MCF 10A (cell line): ENCODE measurements at regions of chr3 and their contacts with region 1.

Region 1: DNA sequence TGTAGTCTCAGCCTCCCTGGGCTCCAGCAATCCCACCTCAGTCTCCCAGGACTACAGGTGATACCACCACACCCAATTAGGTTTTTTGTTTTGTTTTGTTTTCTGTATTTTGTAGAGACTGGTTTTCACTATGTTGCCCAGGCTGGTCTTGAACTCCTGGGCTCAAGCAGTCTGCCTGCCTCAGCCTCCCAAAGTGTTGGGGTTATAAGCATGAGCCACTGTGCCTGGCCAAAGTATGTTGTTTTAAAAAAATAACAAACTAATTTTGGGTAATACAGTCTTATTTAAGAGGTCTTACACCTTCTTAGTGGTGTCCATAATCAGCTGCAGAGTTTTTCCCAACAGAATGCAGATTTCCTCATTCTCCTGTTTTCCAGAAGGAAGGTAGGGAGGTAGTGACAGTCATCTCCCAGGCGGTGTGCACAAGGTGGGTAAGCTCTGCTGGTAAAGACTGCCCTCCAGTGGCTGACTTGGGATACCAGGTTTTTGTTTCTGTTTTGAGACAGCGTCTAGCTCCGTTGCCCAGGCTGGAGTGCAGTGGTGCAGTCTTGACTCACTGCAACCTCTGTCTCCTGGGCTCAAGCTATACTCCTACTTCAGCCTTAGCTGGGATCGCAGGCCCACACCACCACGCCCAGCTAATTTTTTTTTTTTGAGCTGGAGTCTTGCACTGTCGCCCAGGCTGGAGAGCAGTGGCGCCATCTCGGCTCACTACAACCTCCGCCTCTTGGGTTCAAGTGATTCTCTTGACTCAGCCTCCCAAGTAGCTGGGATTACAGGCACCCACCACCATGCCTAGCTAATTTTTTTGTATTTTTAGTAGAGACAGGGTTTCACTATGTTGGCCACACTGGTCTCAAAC is 58.4 kb downstream of the MAP6D1 start:
- DNase-seq: peak; percentile 83
- H3K4me3 Mint-ChIP-seq: no peak overlapping the region
- H3K27ac Mint-ChIP-seq: peak overlapping the region; percentile 14
- H3K4me1 Mint-ChIP-seq: peaks cover 16% of the 10 kb centered on the region
- H3K27me3 Mint-ChIP-seq: no peaks in the 10 kb centered on the region
- CTCF ChIP-seq: peak; percentile 78

Region 2: DNA sequence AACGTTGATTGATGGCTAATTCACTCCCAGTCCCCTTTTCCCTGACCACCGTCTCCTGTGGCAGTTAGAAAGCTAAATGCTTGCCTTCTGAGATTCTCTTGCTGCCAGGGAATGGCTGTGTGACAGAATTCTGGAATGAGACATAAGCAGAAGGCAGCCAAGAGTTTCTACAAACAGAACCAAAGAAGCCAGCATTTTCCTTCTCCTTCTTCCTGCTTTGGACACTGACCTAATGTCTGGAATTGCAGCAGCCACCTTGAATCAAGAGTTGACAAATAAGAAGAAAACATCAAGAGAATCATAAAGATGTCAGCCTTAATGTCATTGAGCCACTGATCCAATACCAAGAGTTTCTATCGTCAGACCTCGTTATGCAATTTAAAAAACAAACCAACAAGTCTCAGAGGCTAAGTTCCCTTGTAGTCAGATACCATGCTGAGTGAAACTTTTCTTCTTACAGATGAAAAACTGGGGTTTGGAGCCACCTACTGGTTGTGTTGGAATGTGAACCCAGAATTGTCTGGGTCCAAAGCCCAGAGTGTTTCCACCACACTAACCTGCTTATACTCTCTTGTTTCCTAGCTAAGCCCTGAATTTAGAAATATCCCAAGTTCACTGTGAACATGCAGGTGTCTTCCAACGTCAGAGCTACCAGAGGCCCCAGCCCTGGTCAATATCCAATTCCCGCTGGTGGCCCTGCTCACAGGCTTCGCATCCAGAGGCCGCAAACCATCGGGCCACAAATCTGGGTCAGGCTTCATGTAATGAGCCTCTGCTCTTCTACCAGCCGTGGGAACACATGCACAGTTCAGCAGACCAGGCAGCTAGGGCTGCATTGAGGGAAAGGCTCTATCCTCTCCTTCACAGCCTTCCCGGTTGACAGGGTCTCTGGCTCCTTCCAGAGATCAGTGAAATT is 381.0 kb before region 1 on chr3:
- CTCF ChIA-PET with region 1: interaction called, 7 read pairs
- POLR2A ChIA-PET with region 1: no interaction called
- intact Hi-C with region 1: loop called (anchors 10 kb)
- DNase-seq: peak; percentile 78
- H3K4me3 Mint-ChIP-seq: no peak overlapping the region
- H3K27ac Mint-ChIP-seq: no peak overlapping the region
- H3K4me1 Mint-ChIP-seq: peaks cover 18% of the 10 kb centered on the region
- H3K27me3 Mint-ChIP-seq: no peaks in the 10 kb centered on the region
- CTCF ChIP-seq: peak; percentile 77

Region 3: DNA sequence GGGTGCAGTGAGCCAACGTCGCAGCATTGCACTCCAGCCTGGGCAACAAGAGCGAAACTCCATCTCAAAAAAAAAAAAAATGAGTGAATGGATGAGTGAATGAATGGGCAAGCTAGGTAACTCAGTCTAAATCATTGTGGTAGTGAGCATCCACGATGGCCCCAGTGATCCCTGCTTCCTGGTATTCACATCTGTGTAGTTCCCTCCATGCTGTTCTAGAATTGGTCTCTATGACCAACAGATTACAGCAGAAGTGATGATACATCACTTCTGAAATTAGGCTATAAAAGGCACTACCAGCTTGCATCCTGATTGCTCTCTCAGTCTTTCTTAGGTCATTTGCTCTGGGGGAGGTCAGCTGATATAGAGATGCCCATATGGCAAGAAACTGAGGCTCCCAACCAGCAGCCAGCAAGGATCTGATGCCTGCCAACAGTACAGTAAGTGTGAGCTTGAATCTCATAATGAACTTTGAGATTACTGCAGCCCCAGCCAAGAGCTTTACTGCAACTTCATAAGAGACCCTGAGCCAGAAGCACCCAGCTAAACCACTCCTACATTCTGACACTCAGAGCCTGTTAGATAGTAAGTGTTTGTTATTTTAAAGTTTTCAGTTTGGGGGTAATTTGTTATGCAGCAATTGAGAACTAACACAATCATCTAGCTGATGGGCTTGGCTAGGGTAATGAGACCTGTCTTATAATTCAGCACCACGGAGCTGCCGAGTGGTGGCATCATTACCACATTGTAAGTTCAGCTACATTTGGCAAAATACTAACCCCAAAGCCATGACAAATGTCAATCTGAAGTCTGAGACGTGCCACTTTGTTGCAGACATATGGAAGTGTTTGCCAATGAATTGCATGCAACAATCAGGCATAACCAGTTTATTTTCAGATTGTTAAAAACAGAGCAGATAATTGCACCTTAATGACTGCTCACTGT is 264.5 kb before region 1 on chr3:
- CTCF ChIA-PET with region 1: interaction called, 11 read pairs
- POLR2A ChIA-PET with region 1: no interaction called
- intact Hi-C with region 1: loop called (anchors 1 kb)
- DNase-seq: peak; percentile 27
- H3K4me3 Mint-ChIP-seq: no peak overlapping the region
- H3K27ac Mint-ChIP-seq: no peak overlapping the region
- H3K4me1 Mint-ChIP-seq: peaks cover 4% of the 10 kb centered on the region
- H3K27me3 Mint-ChIP-seq: no peaks in the 10 kb centered on the region
- CTCF ChIP-seq: peak; percentile 34

Region 4: GRCh38 chr3:183697610-183698317 is 69.2 kb before region 1 on chr3 and contains the start of gene YEATS2:
- CTCF ChIA-PET with region 1: interaction called, 4 read pairs
- POLR2A ChIA-PET with region 1: interaction called, 12 read pairs
- intact Hi-C with region 1: no loop called
- DNase-seq: peak; percentile 63
- H3K4me3 Mint-ChIP-seq: peak within 1 kb of the TSS; percentile 77
- H3K27ac Mint-ChIP-seq: peak within 1 kb of the TSS; percentile 87
- H3K4me1 Mint-ChIP-seq: peaks cover 24% of the 10 kb centered on the region
- H3K27me3 Mint-ChIP-seq: no peaks in the 10 kb centered on the region
- CTCF ChIP-seq: no peak
- total RNA-seq, gene YEATS2: 24.7 and 29.4 TPM in 2 replicates

Region 5: DNA sequence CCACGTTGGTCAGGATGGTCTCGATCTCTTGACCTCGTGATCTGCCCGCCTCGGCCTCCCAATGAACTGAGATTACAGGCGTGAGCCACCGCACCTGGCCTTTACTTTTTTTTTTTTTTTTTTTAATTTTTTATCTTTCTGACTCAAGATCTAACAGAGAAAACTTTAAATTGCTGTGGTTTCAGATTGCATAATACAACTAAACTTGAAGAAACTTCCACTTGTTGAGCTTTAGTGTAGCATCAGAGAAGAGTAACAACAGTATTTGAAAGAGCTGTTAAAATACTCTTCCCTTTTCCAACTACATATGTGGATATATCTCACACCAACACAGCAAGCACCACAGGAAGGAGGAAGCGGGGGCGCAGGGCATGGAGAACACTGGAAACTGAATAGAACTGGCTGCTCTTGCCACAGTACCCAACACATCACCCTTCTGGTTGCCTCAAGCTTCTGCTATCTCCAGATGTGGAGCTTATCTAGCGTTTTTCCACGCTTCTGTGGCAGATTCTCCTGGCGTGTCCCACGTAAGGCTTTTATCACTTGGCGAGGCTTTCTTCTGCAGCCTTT is 13.0 kb after region 1 on chr3:
- CTCF ChIA-PET with region 1: interaction called, 10 read pairs
- POLR2A ChIA-PET with region 1: interaction called, 4 read pairs
- intact Hi-C with region 1: no loop called
- DNase-seq: no peak
- H3K4me3 Mint-ChIP-seq: no peak overlapping the region
- H3K27ac Mint-ChIP-seq: no peak overlapping the region
- H3K4me1 Mint-ChIP-seq: no peaks in the 10 kb centered on the region
- H3K27me3 Mint-ChIP-seq: no peaks in the 10 kb centered on the region
- CTCF ChIP-seq: no peak